ENCODE measurements at regions of chr14 and their contacts with region 1.

Region 1: GRCh38 chr14:94080471-94081289 is at the start of gene DDX24:
- DNase-seq: peak; percentile 91
- H3K4me3 Mint-ChIP-seq: peak within 1 kb of the TSS; percentile 95
- H3K27ac Mint-ChIP-seq: peak within 1 kb of the TSS; percentile 99
- H3K4me1 Mint-ChIP-seq: peaks cover 34% of the 10 kb centered on the region
- H3K27me3 Mint-ChIP-seq: no peaks in the 10 kb centered on the region
- CTCF ChIP-seq: no peak
- total RNA-seq, gene DDX24: 126 and 135 TPM in 2 replicates

Region 2: DNA sequence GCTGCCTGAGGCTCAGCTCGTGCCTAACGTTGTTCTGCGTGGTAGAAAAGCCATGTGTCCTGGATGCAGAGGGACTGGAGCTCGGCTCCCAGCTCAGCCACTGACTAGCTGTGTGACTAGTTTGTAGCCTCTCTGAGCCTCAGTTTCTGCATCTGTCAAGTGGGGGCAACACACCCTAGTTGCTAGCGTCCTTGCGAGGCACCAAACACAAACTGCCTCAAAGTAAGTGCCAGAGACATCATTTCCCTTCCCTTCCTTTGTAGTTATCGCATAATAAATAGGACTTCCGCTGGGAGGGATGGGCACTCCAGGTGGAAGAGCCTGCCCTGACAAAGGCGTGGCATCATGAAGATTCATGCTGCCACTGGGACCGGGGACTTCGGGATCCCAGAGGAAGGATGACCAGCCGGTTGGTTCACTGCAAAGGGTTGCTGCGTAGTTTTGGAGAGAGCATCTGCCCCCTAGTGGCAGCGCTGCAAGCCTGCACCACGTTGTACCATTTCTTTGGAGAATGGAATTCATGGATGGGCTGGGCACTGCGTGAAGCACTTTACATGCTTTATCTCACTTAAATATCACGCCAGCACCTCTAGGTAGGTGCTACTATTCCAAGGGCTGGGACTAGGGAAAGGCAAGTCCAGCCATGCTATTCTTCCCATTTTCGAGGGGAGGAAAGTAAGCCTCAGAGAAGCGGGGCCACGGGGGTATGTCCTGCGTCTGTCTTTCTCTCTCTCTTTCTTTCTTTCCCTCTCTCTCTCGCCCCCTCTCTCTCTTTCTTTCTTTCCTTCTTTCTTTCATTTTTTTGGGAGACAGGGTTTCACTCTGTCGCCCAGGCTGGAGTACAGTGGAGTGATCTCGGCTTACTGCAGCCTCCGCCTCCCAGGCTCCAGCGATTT is 78.9 kb before region 1 on chr14:
- CTCF ChIA-PET with region 1: no interaction called
- POLR2A ChIA-PET with region 1: no interaction called
- intact Hi-C with region 1: no loop called
- DNase-seq: peak; percentile 63
- H3K4me3 Mint-ChIP-seq: no peak overlapping the region
- H3K27ac Mint-ChIP-seq: no peak overlapping the region
- H3K4me1 Mint-ChIP-seq: peaks cover 5% of the 10 kb centered on the region
- H3K27me3 Mint-ChIP-seq: peaks cover 12% of the 10 kb centered on the region
- CTCF ChIP-seq: peak; percentile 88

Region 3: GRCh38 chr14:94056579-94057308 is 23.9 kb before region 1 on chr14:
- CTCF ChIA-PET with region 1: interaction called, 6 read pairs
- POLR2A ChIA-PET with region 1: interaction called, 29 read pairs
- intact Hi-C with region 1: no loop called
- DNase-seq: no peak
- H3K4me3 Mint-ChIP-seq: no peak overlapping the region
- H3K27ac Mint-ChIP-seq: no peak overlapping the region
- H3K4me1 Mint-ChIP-seq: no peaks in the 10 kb centered on the region
- H3K27me3 Mint-ChIP-seq: no peaks in the 10 kb centered on the region
- CTCF ChIP-seq: no peak

Region 4: DNA sequence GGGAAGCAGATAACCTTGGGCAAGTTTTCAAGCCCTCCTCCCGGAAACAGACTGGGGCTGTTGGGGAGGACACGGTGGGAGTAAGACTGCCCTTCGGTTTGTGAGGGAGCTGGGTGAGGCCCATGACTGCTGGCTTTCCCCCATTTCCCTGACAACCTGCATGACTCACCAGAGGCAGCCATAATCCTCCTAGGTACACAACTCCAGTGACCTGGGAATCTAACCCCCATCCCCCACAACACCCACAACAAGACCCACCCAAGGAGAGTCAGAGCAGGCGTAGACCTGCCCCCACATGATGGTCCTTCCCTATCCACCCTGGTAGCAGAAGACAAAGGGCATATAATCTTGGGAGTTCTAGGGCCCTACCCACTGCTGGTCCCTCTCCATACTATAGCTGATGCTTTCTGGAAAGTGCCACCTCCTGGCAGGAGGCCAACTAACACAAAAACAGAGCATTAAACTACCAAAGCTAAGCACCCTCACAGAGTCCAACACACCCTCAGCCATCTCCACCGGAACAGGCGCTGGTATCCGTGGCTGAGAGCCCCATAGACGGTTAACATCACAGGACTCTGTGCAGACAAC is 14.5 kb before region 1 on chr14:
- CTCF ChIA-PET with region 1: interaction called, 4 read pairs
- POLR2A ChIA-PET with region 1: interaction called, 36 read pairs
- intact Hi-C with region 1: loop called (anchors 1 kb)
- DNase-seq: peak; percentile 51
- H3K4me3 Mint-ChIP-seq: peak overlapping the region; percentile 56
- H3K27ac Mint-ChIP-seq: peak overlapping the region; percentile 78
- H3K4me1 Mint-ChIP-seq: peaks cover 43% of the 10 kb centered on the region
- H3K27me3 Mint-ChIP-seq: no peaks in the 10 kb centered on the region
- CTCF ChIP-seq: no peak

Region 5: GRCh38 chr14:94129111-94129757 is 48.6 kb after region 1 on chr14 and contains the start of gene IFI27L2:
- CTCF ChIA-PET with region 1: interaction called, 3 read pairs
- POLR2A ChIA-PET with region 1: interaction called, 31 read pairs
- intact Hi-C with region 1: no loop called
- DNase-seq: peak; percentile 86
- H3K4me3 Mint-ChIP-seq: peak within 1 kb of the TSS; percentile 80
- H3K27ac Mint-ChIP-seq: peak within 1 kb of the TSS; percentile 43
- H3K4me1 Mint-ChIP-seq: peaks cover 9% of the 10 kb centered on the region
- H3K27me3 Mint-ChIP-seq: no peaks in the 10 kb centered on the region
- CTCF ChIP-seq: peak; percentile 26
- total RNA-seq, gene IFI27L2: 44.3 and 59.3 TPM in 2 replicates

Region 6: DNA sequence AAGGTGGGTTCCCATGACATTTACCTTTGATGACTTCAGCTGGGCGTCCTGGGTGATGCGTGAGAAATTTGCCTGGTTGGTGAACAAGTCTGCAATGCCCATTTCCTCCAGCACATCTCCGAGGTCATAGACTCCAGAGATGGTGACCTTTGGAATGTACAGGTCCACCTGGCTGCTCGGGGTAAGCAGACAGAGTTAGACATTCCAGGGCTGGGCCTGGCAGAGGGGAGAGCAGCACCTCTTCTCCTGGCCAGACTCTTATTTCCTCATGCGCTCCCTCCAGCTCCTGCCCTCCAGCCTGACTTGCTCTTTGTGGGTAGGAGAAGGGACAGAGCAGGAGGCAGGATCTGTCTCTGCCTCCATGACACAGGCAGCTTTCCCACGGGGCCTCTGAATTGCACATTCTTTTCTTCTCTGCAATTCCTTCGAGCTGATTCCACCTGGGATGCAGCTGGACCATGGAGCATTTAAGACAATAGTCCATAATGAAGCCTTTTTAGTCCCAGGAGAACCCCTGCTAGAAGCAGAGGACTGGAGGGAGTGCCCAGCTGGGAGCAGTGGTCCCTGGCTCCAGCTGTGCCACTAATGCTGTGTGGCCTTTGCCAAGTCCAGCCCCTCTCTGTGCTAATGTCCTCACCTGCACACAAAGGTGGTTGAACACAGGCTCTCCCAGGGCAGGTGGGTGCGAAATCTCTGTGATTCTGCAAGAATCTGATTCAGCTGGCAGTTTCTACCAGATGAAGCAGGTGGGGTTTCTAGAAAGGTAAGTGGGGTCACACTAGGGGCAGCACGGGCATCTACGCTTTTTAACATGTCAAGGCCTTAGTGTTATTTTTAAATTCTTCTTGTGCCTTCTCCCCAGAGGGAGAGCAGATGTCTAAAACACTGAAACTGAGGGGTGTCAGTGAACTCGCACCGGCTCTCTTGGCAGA is 225.6 kb after region 1 on chr14:
- CTCF ChIA-PET with region 1: no interaction called
- POLR2A ChIA-PET with region 1: no interaction called
- intact Hi-C with region 1: no loop called
- DNase-seq: no peak
- H3K4me3 Mint-ChIP-seq: no peak overlapping the region
- H3K27ac Mint-ChIP-seq: no peak overlapping the region
- H3K4me1 Mint-ChIP-seq: no peaks in the 10 kb centered on the region
- H3K27me3 Mint-ChIP-seq: no peaks in the 10 kb centered on the region
- CTCF ChIP-seq: no peak